ENCODE measurements at regions of chr2 and their contacts with region 1.

Region 1: GRCh38 chr2:222813177-222813843 is 47.5 kb upstream of the ACSL3 start:
- DNase-seq: no peak
- H3K4me3 Mint-ChIP-seq: peak overlapping the region; percentile 23
- H3K27ac Mint-ChIP-seq: peak overlapping the region; percentile 94
- H3K4me1 Mint-ChIP-seq: peaks cover 24% of the 10 kb centered on the region
- H3K27me3 Mint-ChIP-seq: no peaks in the 10 kb centered on the region

Region 2: DNA sequence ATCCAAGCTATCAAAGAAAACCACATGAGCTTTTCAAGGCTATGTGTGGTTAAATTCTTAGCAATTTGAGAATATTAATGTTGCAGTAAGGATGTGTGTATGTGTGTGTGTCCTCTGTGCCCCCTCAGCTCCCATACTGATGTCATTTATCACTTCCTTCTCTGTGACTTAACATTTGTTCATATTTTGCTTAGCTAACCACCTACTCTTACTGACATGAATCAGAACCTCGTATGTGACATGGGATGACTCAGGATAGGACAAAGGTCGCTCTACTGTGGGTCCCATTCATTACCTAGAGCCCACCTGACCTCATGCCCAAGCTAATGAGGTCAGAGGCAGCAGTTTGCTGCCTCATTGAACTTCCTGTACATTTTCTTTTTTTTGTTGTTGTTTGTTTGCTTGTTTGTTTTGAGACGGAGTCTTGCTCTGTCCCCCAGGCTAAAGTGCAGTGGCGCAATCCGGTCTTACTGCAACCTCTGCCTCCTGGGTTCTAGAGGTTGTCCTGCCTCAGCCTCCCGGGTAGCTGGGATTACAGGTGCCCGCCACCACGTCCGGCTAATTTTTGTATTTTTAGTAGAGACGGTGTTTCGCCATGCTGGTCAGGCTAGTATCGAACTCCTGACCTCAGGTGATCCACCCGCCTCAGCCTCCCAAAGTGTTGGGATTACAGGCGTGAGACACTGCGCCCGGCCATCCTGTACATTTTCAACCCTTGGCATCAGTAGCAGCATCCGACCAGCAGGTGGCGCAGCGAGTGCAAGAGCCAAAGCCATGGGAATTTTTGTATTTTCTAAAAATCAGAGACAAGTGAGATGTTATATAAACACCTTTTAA is 105.4 kb before region 1 on chr2:
- intact Hi-C with region 1: loop called (anchors 1 kb)
- DNase-seq: peak; percentile 53
- H3K4me3 Mint-ChIP-seq: no peak overlapping the region
- H3K27ac Mint-ChIP-seq: no peak overlapping the region
- H3K4me1 Mint-ChIP-seq: peaks cover 18% of the 10 kb centered on the region
- H3K27me3 Mint-ChIP-seq: peaks cover 33% of the 10 kb centered on the region

Region 3: DNA sequence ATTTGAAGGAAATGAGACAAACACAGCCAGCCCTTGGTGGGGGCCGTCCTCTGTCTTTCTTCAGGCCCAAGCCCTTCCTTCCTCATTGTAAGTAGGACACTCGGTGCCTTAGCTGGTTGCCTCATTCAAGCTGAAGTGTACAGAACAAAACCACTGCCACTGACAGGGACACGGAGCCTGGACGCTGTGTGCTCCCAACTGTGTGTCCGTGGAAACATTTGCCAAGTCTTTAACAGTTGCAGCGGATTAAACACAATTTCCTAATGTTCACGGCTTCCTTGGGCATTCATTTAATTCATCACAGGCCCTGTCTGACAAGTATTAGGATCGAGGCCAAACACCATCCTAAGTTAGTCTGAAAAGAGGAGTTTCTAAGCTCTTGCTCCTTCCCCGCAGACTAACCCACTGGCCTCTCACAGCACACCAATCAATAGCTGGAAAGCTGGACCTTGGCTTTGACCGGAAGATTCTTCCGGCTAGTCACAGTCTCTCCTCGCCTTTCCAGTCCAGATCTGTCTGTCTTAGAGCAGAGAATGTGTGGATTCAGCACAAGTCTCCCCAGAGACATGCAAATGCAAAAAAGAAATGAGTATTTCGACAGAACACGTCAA is 21.2 kb before region 1 on chr2:
- intact Hi-C with region 1: loop called (anchors 1 kb)
- DNase-seq: no peak
- H3K4me3 Mint-ChIP-seq: no peak overlapping the region
- H3K27ac Mint-ChIP-seq: no peak overlapping the region
- H3K4me1 Mint-ChIP-seq: peaks cover 13% of the 10 kb centered on the region
- H3K27me3 Mint-ChIP-seq: peaks cover 2% of the 10 kb centered on the region

Region 4: DNA sequence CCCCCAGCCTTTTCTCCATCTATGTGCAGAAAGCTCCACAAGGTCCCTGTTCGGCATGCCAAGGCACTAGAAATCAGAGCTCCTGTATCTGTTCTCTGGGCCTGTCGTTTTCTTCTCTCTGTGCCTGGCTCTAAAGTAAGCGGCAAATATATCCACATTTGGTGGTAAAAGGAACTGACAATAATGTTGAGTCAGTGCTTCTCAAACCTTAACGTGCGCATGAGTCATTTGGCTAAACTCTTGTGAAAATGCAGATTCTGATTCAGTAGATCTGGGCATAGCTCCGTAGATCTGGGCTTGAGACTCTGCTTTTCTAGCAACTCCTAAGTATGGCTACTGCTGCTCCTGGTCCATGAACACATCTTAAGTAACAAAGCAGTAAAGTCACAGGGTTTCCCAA is 31.0 kb after region 1 on chr2:
- intact Hi-C with region 1: loop called (anchors 2 kb)
- DNase-seq: no peak
- H3K4me3 Mint-ChIP-seq: no peak overlapping the region
- H3K27ac Mint-ChIP-seq: no peak overlapping the region
- H3K4me1 Mint-ChIP-seq: peaks cover 22% of the 10 kb centered on the region
- H3K27me3 Mint-ChIP-seq: peaks cover 1% of the 10 kb centered on the region

Region 5: GRCh38 chr2:222903234-222904220 is 90.2 kb after region 1 on chr2:
- intact Hi-C with region 1: loop called (anchors 5 kb)
- DNase-seq: no peak
- H3K4me3 Mint-ChIP-seq: no peak overlapping the region
- H3K27ac Mint-ChIP-seq: no peak overlapping the region
- H3K4me1 Mint-ChIP-seq: peaks cover 26% of the 10 kb centered on the region
- H3K27me3 Mint-ChIP-seq: no peaks in the 10 kb centered on the region

Region 6: DNA sequence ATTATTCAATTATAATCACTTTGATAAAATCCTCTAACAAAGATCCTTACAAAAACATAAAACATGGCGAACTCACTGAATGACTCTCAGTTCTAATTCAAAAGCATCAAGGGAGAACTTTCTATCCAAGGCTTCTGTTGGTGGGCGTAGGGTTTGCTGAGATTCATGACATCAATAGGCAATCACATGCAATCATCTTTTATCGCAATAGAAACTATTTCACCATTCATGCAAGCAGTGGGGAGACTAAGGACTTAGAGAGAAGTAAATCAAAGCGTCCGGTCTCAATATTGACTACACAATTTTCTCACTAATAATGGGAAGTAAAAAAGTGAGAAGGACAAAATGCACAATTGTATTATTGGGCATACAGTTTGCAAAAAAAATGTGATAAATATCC is 620.2 kb after region 1 on chr2:
- intact Hi-C with region 1: no loop called
- DNase-seq: no peak
- H3K4me3 Mint-ChIP-seq: no peak overlapping the region
- H3K27ac Mint-ChIP-seq: no peak overlapping the region
- H3K4me1 Mint-ChIP-seq: no peaks in the 10 kb centered on the region
- H3K27me3 Mint-ChIP-seq: no peaks in the 10 kb centered on the region

Measured in activated T-helper 2 cell treated with anti-CD3 and anti-CD28 coated beads, Interferon-gamma antibody, Interleukin-2, Interleukin-4, amounts not matched to agents 10 μg/mL and 5 μg/mL and 100 μg/mL, durations not matched to agents 14 hours and 24 hours and 36 hours (primary cell).